ENCODE measurements at regions of chr7 and their contacts with region 1.

Region 1: DNA sequence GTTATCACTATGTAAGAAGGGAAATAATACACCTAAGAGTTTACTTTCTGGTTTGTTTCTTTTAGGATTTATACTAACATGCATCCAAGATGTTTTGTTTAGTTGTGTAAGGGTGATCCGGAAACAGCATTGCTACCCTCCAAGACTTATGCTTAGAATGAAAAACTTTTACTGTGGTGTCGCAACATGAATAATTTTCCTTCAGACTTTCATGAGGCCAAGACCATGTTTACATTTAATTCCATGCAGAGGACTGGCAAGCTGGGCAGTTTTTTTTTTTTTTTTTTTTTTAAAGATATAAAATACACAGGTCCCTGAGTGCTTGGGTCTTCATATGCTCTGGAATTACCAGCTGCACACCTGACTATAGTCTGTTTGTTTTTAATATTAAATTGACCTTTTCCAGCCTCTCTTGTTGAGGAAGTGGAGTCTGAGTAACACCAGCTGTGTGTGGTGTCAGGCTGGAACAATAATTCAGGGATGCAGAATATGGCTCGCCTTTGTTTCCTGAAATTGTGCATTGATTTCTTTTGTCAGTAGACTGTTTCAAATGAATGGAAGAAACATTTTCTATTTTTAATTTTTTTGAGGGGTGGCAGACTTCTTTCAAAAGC is 81.7 kb downstream of the ST7 start:
- DNase-seq: peak; percentile 69
- ATAC-seq: peak; percentile 81
- H3K4me3 ChIP-seq: no peak overlapping the region
- H3K27ac ChIP-seq: no peak overlapping the region
- H3K4me1 ChIP-seq: peaks cover 2% of the 10 kb centered on the region; the same call in 1 of the 2 replicates
- H3K27me3 ChIP-seq: no peaks in the 10 kb centered on the region
- CTCF ChIP-seq: no peak
- POLR2A ChIP-seq: no peak
- RAD21 ChIP-seq: no peak

Region 2: DNA sequence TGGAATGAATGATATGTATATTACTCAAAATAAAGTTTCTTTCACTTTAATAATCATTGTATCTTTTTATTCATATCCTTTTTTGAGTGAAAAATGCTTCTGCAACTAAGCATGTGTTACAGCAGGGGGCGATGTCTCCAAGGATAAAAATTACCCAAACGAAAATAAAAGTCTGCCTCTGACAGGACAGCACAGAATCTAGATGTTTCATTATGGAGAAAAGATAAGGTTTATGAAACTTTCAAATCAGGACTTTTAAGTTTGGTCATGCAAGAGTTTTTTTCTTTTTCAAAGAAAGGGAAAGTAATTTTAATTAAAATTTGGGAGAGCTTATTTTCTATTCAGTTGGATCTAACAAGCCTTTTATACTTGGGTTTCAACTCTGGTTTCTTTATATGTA is 776.2 kb before region 1 on chr7:
- CTCF ChIA-PET with region 1: no interaction called
- POLR2A ChIA-PET with region 1: no interaction called
- dilution Hi-C with region 1: no loop called
- in situ Hi-C with region 1: no loop called
- intact Hi-C with region 1: no loop called
- DNase-seq: peak; percentile 79
- ATAC-seq: peak; percentile 75
- H3K4me3 ChIP-seq: no peak overlapping the region
- H3K27ac ChIP-seq: peak overlapping the region; percentile 49; the same call in 1 of the 2 replicates
- H3K4me1 ChIP-seq: peaks cover 11% of the 10 kb centered on the region; the same call in 1 of the 2 replicates
- H3K27me3 ChIP-seq: no peaks in the 10 kb centered on the region
- CTCF ChIP-seq: peak; percentile 91
- POLR2A ChIP-seq: 0 out of 2 replicates have a peak, but pooled peaks have one; percentile 39
- RAD21 ChIP-seq: peak; percentile 95

Region 3: GRCh38 chr7:117072620-117073118 is 37.7 kb after region 1 on chr7:
- CTCF ChIA-PET with region 1: no interaction called
- POLR2A ChIA-PET with region 1: interaction called, 18 read pairs
- dilution Hi-C with region 1: no loop called
- in situ Hi-C with region 1: no loop called
- intact Hi-C with region 1: no loop called
- DNase-seq: peak; percentile 71
- ATAC-seq: peak; percentile 49
- H3K4me3 ChIP-seq: no peak overlapping the region
- H3K27ac ChIP-seq: no peak overlapping the region
- H3K4me1 ChIP-seq: no peaks in the 10 kb centered on the region
- H3K27me3 ChIP-seq: no peaks in the 10 kb centered on the region
- CTCF ChIP-seq: no peak
- POLR2A ChIP-seq: no peak
- RAD21 ChIP-seq: no peak